Common myeloid progenitor, CD34-positive (primary cell): ENCODE measurements at regions of chr1 and their contacts with region 1.

Region 1: DNA sequence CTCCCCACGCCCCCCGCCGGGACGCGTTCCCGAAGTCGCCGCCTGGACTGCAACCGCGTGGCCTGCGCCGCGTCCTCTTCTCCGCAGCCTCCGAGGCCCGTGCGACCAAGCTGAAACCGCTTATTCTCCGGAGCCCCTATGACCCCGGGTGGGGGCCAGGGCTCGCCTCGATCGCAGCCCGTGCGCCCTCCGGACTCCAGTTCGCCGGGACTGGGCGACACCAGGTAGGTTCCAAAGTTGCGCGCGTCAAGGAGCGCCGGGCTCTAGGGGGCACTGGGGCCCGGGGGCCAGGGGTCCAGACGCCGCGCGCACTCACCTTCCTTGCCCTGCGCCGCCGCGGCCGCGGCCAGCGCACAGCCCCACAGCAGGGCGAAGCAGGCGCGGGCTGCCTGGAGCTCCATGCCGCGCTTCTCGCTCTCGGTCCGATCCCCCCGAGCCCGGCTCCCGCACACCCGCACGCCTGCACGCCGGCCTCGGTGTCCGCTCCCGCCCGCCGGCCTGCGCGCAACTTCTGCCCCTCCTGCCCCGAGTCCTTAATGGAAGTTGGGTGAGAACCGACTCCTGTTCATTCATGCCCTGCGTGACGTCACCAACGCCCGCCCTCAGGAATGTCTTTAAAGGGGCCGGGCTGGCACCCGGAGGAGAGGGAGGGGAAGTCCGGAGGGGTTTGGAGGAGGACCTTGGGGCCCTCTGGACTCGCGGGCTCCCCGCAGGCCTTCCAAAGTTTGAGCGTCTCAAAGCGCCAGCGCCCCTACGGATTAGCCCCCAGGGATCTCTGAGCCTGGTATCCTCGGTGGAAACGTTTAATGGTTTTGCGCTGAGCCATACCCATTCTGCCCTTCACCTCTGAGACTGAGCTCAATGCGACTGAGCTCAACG is at the start of gene EPHA2:
- DNase-seq: peak in 2 of 3 donors; percentile 42 to 55
- H3K4me3 ChIP-seq: peak within 1 kb of the TSS in 6 of 7 experiments; percentile 23 to 71 (median 55)
- H3K27ac ChIP-seq: no peak within 1 kb of the TSS
- H3K4me1 ChIP-seq: peaks cover 3 to 50% (median 39%) of the 10 kb centered on the region in 4 experiments
- H3K27me3 ChIP-seq: peaks cover 0 to 50% (median 18%) of the 10 kb centered on the region in 5 experiments

Region 2: GRCh38 chr1:15966081-15966955 is 189.5 kb before region 1 on chr1:
- CTCF ChIA-PET with region 1: no interaction called
- POLR2A ChIA-PET with region 1: no interaction called
- DNase-seq: peak; percentile 67 to 91 (median 89)
- H3K4me3 ChIP-seq: peak overlapping the region in 3 of 7 experiments; percentile 20 to 54 (median 23)
- H3K27ac ChIP-seq: peak overlapping the region; percentile 19 to 63
- H3K4me1 ChIP-seq: peaks cover 5 to 21% (median 17%) of the 10 kb centered on the region in 4 experiments
- H3K27me3 ChIP-seq: no peaks in the 10 kb centered on the region

Region 3: GRCh38 chr1:16032388-16033103 is 123.2 kb before region 1 on chr1:
- CTCF ChIA-PET with region 1: no interaction called
- POLR2A ChIA-PET with region 1: no interaction called
- DNase-seq: peak; percentile 86 to 89 (median 89)
- H3K4me3 ChIP-seq: no peak overlapping the region
- H3K27ac ChIP-seq: no peak overlapping the region
- H3K4me1 ChIP-seq: no peaks in the 10 kb centered on the region
- H3K27me3 ChIP-seq: peaks cover 0 to 16% (median 0%) of the 10 kb centered on the region in 5 experiments

Region 4: GRCh38 chr1:16139473-16139962 is 16.3 kb before region 1 on chr1:
- CTCF ChIA-PET with region 1: interaction called, 13 read pairs
- POLR2A ChIA-PET with region 1: interaction called, 3 read pairs
- DNase-seq: no peak
- H3K4me3 ChIP-seq: no peak overlapping the region
- H3K27ac ChIP-seq: no peak overlapping the region
- H3K4me1 ChIP-seq: peaks cover 0 to 23% (median 17%) of the 10 kb centered on the region in 4 experiments
- H3K27me3 ChIP-seq: peaks cover 0 to 2% (median 0%) of the 10 kb centered on the region in 5 experiments

Region 5: GRCh38 chr1:16315437-16315836 is 159.7 kb after region 1 on chr1:
- CTCF ChIA-PET with region 1: no interaction called
- POLR2A ChIA-PET with region 1: no interaction called
- DNase-seq: no peak
- H3K4me3 ChIP-seq: no peak overlapping the region
- H3K27ac ChIP-seq: no peak overlapping the region
- H3K4me1 ChIP-seq: peaks cover 0 to 9% (median 4%) of the 10 kb centered on the region in 4 experiments
- H3K27me3 ChIP-seq: no peaks in the 10 kb centered on the region